ENCODE measurements at regions of chr10 and their contacts with region 1.

Region 1: DNA sequence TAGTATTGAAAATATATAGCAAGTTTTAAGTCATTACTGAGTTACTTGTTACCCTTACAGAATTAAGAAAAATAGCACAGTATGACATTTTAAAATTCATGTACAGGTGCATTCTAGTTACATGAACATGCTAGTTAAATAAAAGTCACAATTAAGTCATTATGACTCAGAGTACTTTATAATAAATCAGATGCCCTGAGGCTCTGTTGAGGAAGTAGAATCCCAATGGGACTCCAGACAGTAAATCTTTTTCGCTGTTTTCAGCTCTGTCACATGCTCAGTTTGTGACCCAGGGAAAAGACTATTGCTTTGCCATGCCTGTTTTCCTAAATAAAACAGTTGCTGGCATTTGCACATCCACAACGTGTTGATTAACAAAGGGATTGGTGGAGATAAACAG is 21.0 kb downstream of the NUDT13 start:
- DNase-seq: peak; percentile 64
- H3K4me3 ChIP-seq: no peak overlapping the region
- H3K27ac ChIP-seq: no peak overlapping the region
- H3K4me1 ChIP-seq: peaks cover 9% of the 10 kb centered on the region
- H3K27me3 ChIP-seq: no peaks in the 10 kb centered on the region
- CTCF ChIP-seq: no peak

Region 2: DNA sequence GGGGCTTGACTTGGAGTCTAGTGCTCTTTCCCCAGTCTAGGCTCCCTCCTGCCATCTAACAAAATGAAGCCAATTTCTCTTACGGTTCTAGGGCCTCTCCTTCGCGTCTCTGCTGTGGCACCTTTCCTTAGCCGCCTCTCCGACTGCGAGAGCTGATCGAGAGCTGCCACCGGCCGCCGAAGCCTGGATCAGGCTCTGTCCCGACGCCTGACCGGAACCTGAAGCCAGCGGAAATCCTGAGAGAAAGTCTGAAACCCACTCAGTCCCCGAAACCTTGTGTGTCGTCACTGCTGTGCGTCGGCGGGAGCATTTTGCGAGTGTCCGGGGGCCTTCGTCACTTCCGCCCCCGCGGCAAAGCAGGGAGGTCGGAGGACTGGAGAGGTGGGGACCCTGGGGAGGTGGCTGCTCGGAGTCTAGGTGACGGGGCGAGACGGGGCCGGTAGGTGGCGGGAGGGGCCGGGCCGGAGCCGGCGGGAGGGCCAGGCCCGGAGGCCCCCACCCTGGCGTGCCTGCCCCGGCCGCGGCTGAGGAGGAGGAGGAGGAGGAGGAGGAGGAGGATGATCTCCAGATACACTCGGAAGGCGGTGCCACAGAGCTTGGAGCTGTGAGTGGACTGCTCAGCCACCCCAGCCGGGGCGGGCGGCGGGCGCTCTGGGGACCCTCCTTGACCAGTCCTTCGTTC is 36.6 kb after region 1 on chr10 and contains the starts of genes ECD and FAM149B1:
- CTCF ChIA-PET with region 1: no interaction called
- POLR2A ChIA-PET with region 1: interaction called, 11 read pairs
- intact Hi-C with region 1: no loop called
- DNase-seq: peak; percentile 97
- H3K4me3 ChIP-seq: peak within 1 kb of the TSS; percentile 89
- H3K27ac ChIP-seq: peak within 1 kb of the TSS; percentile 95
- H3K4me1 ChIP-seq: no peaks in the 10 kb centered on the region
- H3K27me3 ChIP-seq: no peaks in the 10 kb centered on the region
- CTCF ChIP-seq: no peak
- total RNA-seq, gene ECD: 37.3 and 37.4 TPM in 2 replicates
- total RNA-seq, gene FAM149B1: 10.9 and 13.4 TPM in 2 replicates

Region 3: GRCh38 chr10:73467206-73467605 is 335.9 kb after region 1 on chr10:
- CTCF ChIA-PET with region 1: no interaction called
- POLR2A ChIA-PET with region 1: no interaction called
- intact Hi-C with region 1: no loop called
- DNase-seq: no peak
- H3K4me3 ChIP-seq: no peak overlapping the region
- H3K27ac ChIP-seq: no peak overlapping the region
- H3K4me1 ChIP-seq: no peaks in the 10 kb centered on the region
- H3K27me3 ChIP-seq: no peaks in the 10 kb centered on the region
- CTCF ChIP-seq: no peak